Dendritic cell treated with granulocyte-macrophage colony-stimulating factor and Interleukin-4, amounts not matched to agents 40 ng/mL and 50 ng/mL, for 4 days (primary cell): ENCODE measurements at regions of chr4 and their contacts with region 1.

Region 1: DNA sequence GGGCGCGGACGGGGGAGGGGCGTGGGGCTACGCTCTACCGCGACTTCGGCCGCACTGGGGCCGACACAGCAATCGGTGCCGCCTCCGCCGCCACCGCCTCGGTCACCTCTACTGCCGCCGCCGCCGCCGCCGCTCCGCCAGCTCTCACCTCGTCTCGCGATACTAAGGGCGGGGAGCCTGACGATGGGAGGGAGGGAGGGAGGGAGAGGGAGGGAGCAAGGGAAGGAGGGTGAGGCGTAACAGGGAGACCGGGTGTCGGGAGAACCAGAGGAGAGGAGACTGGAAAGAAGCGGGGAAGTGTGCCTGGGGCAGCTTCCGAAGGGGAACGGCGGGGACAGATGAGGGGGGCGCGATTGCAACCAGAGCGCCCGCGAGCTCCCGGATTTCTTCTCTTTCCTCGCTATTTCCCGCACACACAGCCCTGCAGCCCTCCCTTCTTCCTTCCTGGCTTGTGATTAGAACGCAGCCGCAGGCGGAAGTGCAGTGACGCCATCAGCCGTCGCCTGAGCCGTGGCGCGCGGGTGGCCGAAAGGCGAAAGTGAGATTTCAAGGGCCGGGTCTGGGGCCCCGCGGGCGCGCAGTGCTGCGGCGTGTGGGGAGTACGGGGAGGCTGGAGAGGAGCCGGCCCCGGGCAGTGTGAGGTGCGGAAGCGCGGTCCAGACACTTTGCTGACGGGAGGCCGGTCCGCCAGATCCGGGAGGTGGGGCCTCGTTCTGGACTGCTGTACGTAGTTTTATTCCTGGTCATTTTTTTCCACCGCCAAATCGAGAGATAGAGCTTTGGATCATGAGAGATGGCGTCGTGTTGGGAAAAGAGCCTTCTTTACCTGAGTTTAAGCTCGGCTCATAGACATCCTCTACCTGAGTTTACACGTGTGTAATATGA is at the start of gene ANKRD17:
- H3K4me3 Mint-ChIP-seq: peak within 1 kb of the TSS; percentile 98
- H3K27ac Mint-ChIP-seq: peak within 1 kb of the TSS; percentile 99
- H3K4me1 Mint-ChIP-seq: peaks cover 35% of the 10 kb centered on the region
- H3K27me3 Mint-ChIP-seq: no peaks in the 10 kb centered on the region

Region 2: DNA sequence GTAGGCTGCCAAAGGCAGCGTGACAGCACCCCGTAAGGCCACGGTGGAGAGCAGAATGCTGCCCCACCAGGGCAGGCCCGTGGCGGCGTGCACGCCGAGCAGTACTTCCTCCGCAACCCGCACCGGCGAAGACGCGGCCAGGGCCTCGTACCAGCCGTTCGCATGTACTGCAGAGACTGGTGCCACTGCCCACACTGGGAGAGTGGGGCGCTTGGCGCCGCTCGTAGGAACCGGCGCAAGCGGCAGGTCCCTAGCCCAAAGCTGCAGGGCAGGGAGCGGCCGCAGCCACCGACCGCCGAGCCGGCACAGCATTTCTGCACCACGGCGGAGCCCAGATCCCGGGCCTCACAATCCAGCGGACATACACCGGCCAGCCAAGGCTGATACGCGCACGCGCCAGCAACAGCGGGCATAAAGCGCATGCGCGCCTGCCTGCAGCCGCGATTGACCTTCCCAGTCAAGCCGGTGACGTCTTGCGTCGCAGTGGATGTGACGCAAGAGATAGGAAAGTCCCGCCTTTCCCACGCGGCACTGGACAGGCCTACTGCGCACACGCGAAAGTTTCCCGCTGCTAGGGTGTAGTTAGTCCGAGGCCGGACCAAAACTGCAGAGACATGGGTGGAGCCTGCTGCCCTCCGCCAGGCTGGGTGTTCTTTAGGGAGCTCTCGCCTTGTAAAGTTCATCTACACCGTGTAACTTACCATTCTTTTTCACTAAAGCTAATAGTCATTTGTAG is 189.4 kb before region 1 on chr4 and contains the start of gene COX18:
- intact Hi-C with region 1: loop called (anchors 1 kb)
- H3K4me3 Mint-ChIP-seq: peak within 1 kb of the TSS; percentile 93
- H3K27ac Mint-ChIP-seq: peak within 1 kb of the TSS; percentile 100
- H3K4me1 Mint-ChIP-seq: peaks cover 24% of the 10 kb centered on the region
- H3K27me3 Mint-ChIP-seq: no peaks in the 10 kb centered on the region

Region 3: GRCh38 chr4:73127839-73128453 is 131.0 kb before region 1 on chr4:
- intact Hi-C with region 1: loop called (anchors 5 kb)
- H3K4me3 Mint-ChIP-seq: no peak overlapping the region
- H3K27ac Mint-ChIP-seq: peak overlapping the region; percentile 23
- H3K4me1 Mint-ChIP-seq: no peaks in the 10 kb centered on the region
- H3K27me3 Mint-ChIP-seq: no peaks in the 10 kb centered on the region

Region 4: GRCh38 chr4:73142995-73143547 is 115.9 kb before region 1 on chr4:
- intact Hi-C with region 1: loop called (anchors 5 kb)
- H3K4me3 Mint-ChIP-seq: no peak overlapping the region
- H3K27ac Mint-ChIP-seq: no peak overlapping the region
- H3K4me1 Mint-ChIP-seq: no peaks in the 10 kb centered on the region
- H3K27me3 Mint-ChIP-seq: no peaks in the 10 kb centered on the region

Region 5: DNA sequence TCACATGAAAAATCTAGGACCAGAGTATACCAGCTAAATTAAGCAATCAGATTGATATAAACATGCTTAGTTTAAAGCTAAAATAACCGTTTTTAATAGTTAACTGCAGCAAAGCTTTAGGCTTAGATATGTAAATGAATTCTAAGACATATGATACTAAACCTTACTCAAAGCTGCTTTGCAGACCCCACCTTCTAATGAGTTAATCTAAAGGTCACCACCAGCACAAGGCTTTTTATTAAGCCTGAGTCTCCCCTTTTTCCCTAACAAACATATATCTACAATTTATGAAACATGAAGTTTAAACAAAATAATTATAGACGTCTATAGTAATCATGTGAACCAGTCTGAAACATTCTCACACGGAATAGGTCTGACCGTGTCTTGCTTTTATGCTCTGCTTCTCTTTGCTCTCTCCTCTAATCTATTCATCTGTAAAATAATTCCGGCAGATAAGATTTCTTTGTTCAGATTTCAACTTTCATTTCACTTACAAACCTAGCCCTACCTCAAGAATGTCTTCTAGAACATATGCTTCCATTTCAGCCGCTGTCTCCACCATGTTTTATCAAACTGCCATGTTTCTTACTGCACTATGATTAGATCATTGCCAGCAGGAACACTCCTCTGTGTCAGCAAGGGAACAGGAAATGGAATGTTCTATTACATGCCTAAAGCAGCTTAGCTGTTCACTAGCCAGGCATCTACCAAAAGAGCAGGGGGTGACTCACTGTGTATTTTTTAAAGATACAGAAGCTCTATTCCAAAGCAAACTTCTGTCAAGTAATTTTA is 36.3 kb before region 1 on chr4:
- intact Hi-C with region 1: loop called (anchors 1 kb)
- H3K4me3 Mint-ChIP-seq: no peak overlapping the region
- H3K27ac Mint-ChIP-seq: no peak overlapping the region
- H3K4me1 Mint-ChIP-seq: peaks cover 20% of the 10 kb centered on the region
- H3K27me3 Mint-ChIP-seq: no peaks in the 10 kb centered on the region

Region 6: DNA sequence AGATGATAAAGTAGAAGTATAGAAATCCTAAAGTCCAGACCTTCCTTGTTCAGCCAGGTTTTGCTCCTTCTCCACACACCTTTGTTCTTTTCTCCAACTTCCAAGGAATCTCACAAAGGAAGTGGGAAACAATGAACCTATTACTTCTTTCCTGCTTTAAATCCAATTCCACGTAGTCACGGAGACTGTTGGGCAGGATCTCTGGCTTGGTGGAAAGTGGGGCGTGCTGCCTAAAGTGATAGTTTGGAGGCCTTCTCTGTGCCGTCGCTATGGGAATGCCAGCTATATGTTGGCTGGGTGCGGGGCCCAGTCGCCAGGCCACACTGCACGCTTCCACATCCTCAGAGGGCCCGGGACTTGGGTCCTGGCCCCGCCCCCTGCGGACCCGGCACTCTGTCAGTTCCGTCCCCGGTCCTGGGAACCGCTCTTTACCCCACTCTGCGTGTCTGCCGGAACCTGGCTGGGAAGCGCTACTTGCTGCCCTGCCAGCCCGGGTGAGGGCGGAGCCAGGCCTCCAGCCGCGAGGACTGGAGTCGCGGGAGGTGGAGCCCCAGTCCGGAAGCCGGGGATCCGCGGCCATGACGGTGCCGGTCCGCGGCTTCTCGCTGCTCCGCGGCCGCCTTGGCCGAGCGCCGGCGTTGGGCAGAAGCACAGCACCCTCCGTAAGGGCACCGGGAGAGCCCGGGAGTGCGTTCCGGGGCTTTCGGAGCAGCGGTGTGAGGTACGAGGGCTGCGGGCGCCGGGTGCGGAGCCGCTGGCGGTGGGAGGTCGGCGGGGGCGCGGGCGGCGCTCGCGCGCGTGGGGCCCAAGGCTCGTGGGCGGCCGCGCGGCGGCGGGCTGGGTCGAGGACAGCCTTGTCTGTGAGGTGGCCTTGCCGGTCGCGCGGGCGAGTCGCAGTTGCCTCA is 898.9 kb after region 1 on chr4 and contains the start of gene MTHFD2L:
- intact Hi-C with region 1: loop called (anchors 5 kb)
- H3K4me3 Mint-ChIP-seq: peak within 1 kb of the TSS; percentile 85
- H3K27ac Mint-ChIP-seq: peak within 1 kb of the TSS; percentile 89
- H3K4me1 Mint-ChIP-seq: peaks cover 19% of the 10 kb centered on the region
- H3K27me3 Mint-ChIP-seq: no peaks in the 10 kb centered on the region